A673 (cell line): ENCODE measurements at regions of chr7 and their contacts with region 1.

Region 1: DNA sequence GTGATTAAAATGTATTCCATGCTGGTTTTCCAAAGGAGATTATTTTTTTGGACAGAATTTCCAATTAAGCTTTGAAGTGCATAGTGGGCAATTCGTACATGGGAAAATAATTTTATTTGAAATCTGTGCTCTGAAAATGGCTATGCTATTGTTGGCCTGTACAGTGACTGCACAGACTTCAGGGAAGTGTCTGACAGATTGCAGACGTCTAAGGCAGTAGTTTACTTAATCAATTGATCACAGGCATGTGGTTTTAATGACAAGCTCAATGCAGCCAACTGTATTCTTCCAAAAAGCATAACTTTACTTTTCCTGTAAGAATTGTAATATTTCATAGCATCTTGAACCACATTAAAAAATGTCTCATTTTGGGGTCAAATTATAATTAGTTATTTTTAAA is 102.0 kb downstream of the SEMA3C start:
- DNase-seq: no peak
- H3K4me3 ChIP-seq: no peak overlapping the region
- H3K27ac ChIP-seq: no peak overlapping the region
- H3K4me1 ChIP-seq: no peaks in the 10 kb centered on the region
- H3K27me3 ChIP-seq: no peaks in the 10 kb centered on the region
- CTCF ChIP-seq: no peak

Region 2: DNA sequence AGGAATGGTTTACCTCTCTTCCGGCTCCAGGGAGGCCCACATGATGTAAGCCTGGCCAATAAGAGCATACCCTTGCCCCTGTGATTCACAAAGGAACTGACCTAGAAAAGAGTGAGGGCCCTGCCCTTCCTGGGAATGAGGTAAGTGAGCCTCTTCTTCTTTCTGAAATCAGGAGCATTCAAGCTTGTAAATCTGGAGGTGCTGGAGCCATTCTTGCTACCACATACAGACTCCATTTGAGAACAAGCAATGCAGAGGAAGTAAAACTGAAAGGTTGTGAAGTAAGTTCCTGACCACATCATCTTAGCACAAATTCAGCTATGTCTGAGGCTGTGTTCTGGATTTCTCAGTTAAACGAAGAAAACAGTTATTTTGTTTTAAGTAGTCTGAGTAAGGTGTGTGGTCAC is 46.1 kb before region 1 on chr7:
- CTCF ChIA-PET with region 1: no interaction called
- POLR2A ChIA-PET with region 1: no interaction called
- intact Hi-C with region 1: no loop called
- DNase-seq: no peak
- H3K4me3 ChIP-seq: no peak overlapping the region
- H3K27ac ChIP-seq: no peak overlapping the region
- H3K4me1 ChIP-seq: no peaks in the 10 kb centered on the region
- H3K27me3 ChIP-seq: no peaks in the 10 kb centered on the region
- CTCF ChIP-seq: no peak

Region 3: DNA sequence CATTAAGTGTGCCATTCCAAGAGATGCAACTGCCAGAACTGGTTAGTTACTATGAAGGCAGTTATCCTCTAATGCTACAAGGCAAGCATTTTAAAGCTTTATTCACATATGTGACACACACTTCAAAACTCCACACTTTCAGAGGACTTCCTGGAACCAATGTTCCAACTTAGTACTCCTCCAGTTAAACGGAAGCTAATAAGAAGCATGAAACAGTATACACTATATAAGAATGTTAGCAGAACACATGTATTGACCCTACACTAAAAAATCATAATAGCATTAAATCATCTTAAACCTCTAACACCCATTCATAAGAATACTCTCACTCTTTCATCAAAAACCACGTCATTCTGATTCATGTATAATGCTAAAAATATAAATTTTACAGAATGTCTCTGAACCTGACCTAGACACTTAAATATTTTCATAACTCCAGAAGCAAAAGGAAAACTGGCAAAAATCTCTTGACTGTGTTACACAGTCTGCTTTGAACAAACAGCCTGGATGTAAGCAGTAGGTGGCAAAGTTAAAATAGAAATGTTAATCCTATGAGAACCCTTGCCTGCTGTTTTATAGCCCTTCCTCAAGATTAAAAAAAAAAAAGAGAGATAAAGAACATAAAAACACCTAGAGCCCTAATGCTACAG is 33.0 kb before region 1 on chr7:
- CTCF ChIA-PET with region 1: no interaction called
- POLR2A ChIA-PET with region 1: interaction called, 23 read pairs
- intact Hi-C with region 1: no loop called
- DNase-seq: peak; percentile 64
- H3K4me3 ChIP-seq: no peak overlapping the region
- H3K27ac ChIP-seq: no peak overlapping the region
- H3K4me1 ChIP-seq: peaks cover 34% of the 10 kb centered on the region
- H3K27me3 ChIP-seq: no peaks in the 10 kb centered on the region
- CTCF ChIP-seq: no peak